ENCODE measurements at regions of chr20 and their contacts with region 1.

Region 1: GRCh38 chr20:12177657-12178293 is 260.1 kb downstream of the BTBD3 start:
- DNase-seq: no peak
- H3K4me3 ChIP-seq: no peak overlapping the region
- H3K27ac ChIP-seq: no peak overlapping the region
- H3K4me1 ChIP-seq: no peaks in the 10 kb centered on the region
- H3K27me3 ChIP-seq: no peaks in the 10 kb centered on the region
- CTCF ChIP-seq: no peak
- EP300 ChIP-seq: no peak
- POLR2A ChIP-seq: no peak

Region 2: GRCh38 chr20:11054266-11054993 is 1123.3 kb before region 1 on chr20:
- intact Hi-C with region 1: loop called in 1 of 4 experiments (anchors 5 kb)
- DNase-seq: no peak
- H3K4me3 ChIP-seq: no peak overlapping the region
- H3K27ac ChIP-seq: no peak overlapping the region
- H3K4me1 ChIP-seq: no peaks in the 10 kb centered on the region
- H3K27me3 ChIP-seq: no peaks in the 10 kb centered on the region
- CTCF ChIP-seq: no peak
- EP300 ChIP-seq: no peak
- POLR2A ChIP-seq: no peak

Measured in ovary (tissue), 10 donors.